H1 (cell line): ENCODE measurements at regions of chr3 and their contacts with region 1.

Region 1: GRCh38 chr3:157542711-157543500 is 39.7 kb upstream of the VEPH1 start:
- DNase-seq: peak; percentile 25 to 85
- H3K4me3 ChIP-seq: peak overlapping the region; percentile 22 to 65 (median 39)
- H3K27ac ChIP-seq: no peak overlapping the region
- H3K4me1 ChIP-seq: no peaks in the 10 kb centered on the region; a peak in 1 of 7 replicates
- H3K27me3 ChIP-seq: peaks cover 0 to 5% (median 0%) of the 10 kb centered on the region in 4 experiments; a peak in 1 of 7 replicates
- CTCF ChIP-seq: peak; percentile 56 to 89 (median 86)
- EP300 ChIP-seq: no peak
- POLR2A ChIP-seq: no peak
- RAD21 ChIP-seq: peak; percentile 34 to 45; a peak in 3 of 4 replicates

Region 2: GRCh38 chr3:157520485-157521150 is 22.3 kb before region 1 on chr3:
- CTCF ChIA-PET with region 1: no interaction called
- POLR2A ChIA-PET with region 1: no interaction called
- DNase-seq: no peak
- H3K4me3 ChIP-seq: no peak overlapping the region
- H3K27ac ChIP-seq: no peak overlapping the region
- H3K4me1 ChIP-seq: no peaks in the 10 kb centered on the region
- H3K27me3 ChIP-seq: no peaks in the 10 kb centered on the region
- CTCF ChIP-seq: no peak
- EP300 ChIP-seq: no peak
- POLR2A ChIP-seq: no peak
- RAD21 ChIP-seq: no peak

Region 3: GRCh38 chr3:157559401-157559800 is 16.5 kb after region 1 on chr3:
- CTCF ChIA-PET with region 1: interaction called, 12 read pairs
- POLR2A ChIA-PET with region 1: no interaction called
- DNase-seq: no peak
- H3K4me3 ChIP-seq: no peak overlapping the region
- H3K27ac ChIP-seq: no peak overlapping the region
- H3K4me1 ChIP-seq: no peaks in the 10 kb centered on the region
- H3K27me3 ChIP-seq: no peaks in the 10 kb centered on the region
- CTCF ChIP-seq: no peak
- EP300 ChIP-seq: no peak
- POLR2A ChIP-seq: no peak
- RAD21 ChIP-seq: no peak

Region 4: GRCh38 chr3:158058495-158059130 is 515.7 kb after region 1 on chr3:
- CTCF ChIA-PET with region 1: no interaction called
- POLR2A ChIA-PET with region 1: no interaction called
- DNase-seq: no peak
- H3K4me3 ChIP-seq: no peak overlapping the region
- H3K27ac ChIP-seq: no peak overlapping the region
- H3K4me1 ChIP-seq: no peaks in the 10 kb centered on the region
- H3K27me3 ChIP-seq: no peaks in the 10 kb centered on the region
- CTCF ChIP-seq: no peak
- EP300 ChIP-seq: no peak
- POLR2A ChIP-seq: no peak
- RAD21 ChIP-seq: no peak